ENCODE measurements at regions of chr17 and their contacts with region 1.

Region 1: GRCh38 chr17:74235040-74235581 is 21.7 kb downstream of the TTYH2 start:
- DNase-seq: no peak
- ATAC-seq: peak in 2 of 4 donors; percentile 15 to 36
- H3K4me3 ChIP-seq: peak overlapping the region in 7 of 12 donors; percentile 1 to 43 (median 26)
- H3K27ac ChIP-seq: peak overlapping the region in 11 of 12 donors; percentile 23 to 91 (median 62)
- H3K4me1 ChIP-seq: peaks cover 0 to 62% (median 24%) of the 10 kb centered on the region in 12 donors
- H3K27me3 ChIP-seq: no peaks in the 10 kb centered on the region
- CTCF ChIP-seq: no peak
- POLR2A ChIP-seq: no peak

Region 2: GRCh38 chr17:74218436-74218835 is 16.7 kb before region 1 on chr17:
- intact Hi-C with region 1: loop called in 2 of 10 experiments (anchors 2 kb)
- DNase-seq: no peak
- ATAC-seq: no peak
- H3K4me3 ChIP-seq: no peak overlapping the region
- H3K27ac ChIP-seq: no peak overlapping the region
- H3K4me1 ChIP-seq: peaks cover 0 to 45% (median 19%) of the 10 kb centered on the region in 12 donors
- H3K27me3 ChIP-seq: no peaks in the 10 kb centered on the region
- CTCF ChIP-seq: no peak
- POLR2A ChIP-seq: no peak

Region 3: GRCh38 chr17:74770498-74771318 is 535.6 kb after region 1 on chr17:
- intact Hi-C with region 1: no loop called
- DNase-seq: peak; percentile 61 to 85 (median 72)
- ATAC-seq: peak; percentile 44 to 68 (median 60)
- H3K4me3 ChIP-seq: no peak overlapping the region
- H3K27ac ChIP-seq: no peak overlapping the region
- H3K4me1 ChIP-seq: peaks cover 0 to 62% (median 33%) of the 10 kb centered on the region in 12 donors
- H3K27me3 ChIP-seq: no peaks in the 10 kb centered on the region
- CTCF ChIP-seq: peak; percentile 68 to 86 (median 76)
- POLR2A ChIP-seq: no peak